ENCODE measurements at regions of chr6 and their contacts with region 1.

Region 1: GRCh38 chr6:43059168-43060033 is at the starts of genes KLC4 and MRPL2:
- DNase-seq: peak; percentile 99
- H3K4me3 Mint-ChIP-seq: peak within 1 kb of the TSS; percentile 94
- H3K27ac Mint-ChIP-seq: peak within 1 kb of the TSS; percentile 96
- H3K4me1 Mint-ChIP-seq: peaks cover 28% of the 10 kb centered on the region
- H3K27me3 Mint-ChIP-seq: no peaks in the 10 kb centered on the region
- CTCF ChIP-seq: no peak
- total RNA-seq, gene KLC4: 17.5 and 23.4 TPM in 2 replicates
- total RNA-seq, gene MRPL2: 155 and 174 TPM in 2 replicates

Region 2: DNA sequence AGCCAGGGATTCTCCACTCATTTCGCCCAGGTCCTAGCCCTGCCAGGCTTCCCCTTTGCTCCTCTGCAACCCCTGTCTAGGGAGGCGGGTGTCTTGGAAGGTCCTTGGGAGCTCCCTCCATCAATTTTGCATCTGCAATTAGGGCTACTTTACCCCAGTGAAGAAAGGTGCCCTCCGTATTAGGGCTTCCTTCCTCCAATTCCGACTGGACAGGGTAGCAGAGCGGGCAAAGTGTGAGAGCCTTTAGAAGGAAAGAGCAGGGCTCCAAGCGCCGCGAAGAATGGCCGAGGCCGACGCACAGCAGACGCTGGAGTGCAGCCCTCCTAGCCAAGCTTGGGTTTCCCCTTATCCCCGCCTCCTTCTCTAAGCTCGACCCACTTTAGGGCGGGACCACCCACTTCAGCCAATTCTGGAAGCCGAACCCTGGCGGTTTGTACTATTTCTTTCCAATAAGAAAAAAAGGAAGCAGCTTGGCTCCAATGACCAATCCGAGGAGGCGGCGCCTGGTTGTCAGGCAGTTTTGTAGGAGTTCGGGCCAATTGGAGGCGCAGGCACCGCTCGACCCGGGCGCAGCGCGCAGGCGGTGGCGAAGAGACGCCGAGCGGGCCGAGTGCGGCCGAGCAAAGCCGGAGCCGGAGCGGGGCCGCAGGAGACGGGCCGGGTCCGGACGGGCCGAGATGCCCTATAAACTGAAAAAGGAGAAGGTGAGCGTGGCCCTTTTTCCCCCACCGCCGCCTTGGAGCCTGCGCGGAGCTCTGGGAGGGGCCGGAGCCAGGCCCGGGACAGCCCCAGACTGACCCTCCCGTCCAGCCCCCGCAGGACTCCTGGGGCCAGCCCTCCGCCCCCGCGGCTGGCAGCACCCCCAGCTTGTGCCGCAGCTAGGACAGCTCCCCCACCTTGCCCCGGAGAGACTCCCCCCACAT is 75.1 kb before region 1 on chr6 and contains the start of gene PPP2R5D:
- CTCF ChIA-PET with region 1: interaction called, 3 read pairs
- POLR2A ChIA-PET with region 1: interaction called, 19 read pairs
- intact Hi-C with region 1: no loop called
- DNase-seq: peak; percentile 99
- H3K4me3 Mint-ChIP-seq: peak within 1 kb of the TSS; percentile 78
- H3K27ac Mint-ChIP-seq: peak within 1 kb of the TSS; percentile 90
- H3K4me1 Mint-ChIP-seq: peaks cover 39% of the 10 kb centered on the region
- H3K27me3 Mint-ChIP-seq: no peaks in the 10 kb centered on the region
- CTCF ChIP-seq: no peak
- total RNA-seq, gene PPP2R5D: 16.5 and 17.9 TPM in 2 replicates

Region 3: DNA sequence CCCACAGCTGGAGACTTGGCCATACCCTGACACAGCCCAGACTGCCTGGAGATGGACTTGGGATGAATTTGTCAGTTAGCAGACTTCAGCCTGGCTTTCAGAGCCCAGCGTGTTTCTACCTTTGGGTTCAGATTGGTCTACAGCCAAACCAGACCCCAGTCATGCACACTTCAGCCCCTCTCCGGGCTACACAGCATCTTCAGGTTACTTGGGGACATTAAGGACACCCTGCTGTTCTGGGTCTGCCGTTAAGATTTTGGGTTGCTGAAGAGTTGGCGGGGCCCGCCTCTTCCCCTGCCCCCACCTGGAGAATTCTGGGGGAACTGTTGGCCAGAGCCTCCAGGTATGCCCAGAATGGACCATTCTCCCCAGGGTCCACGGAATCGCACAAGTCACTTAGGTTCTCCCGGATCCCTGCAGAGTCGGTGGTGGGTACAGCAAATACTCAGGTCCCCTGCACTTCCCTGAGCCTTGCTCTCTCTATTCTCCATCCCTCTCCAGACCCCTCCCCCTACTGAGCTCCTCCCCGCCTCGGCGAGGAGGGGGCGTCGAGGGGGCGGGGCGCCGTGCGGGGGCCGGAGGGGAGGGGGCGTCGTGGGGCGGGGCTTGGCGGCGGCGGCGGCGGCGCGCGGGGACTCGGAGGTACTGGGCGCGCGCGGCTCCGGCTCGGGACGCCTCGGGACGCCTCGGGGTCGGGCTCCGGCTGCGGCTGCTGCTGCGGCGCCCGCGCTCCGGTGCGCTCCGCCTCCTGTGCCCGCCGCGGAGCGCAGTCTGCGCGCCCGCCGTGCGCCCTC is 16.5 kb after region 1 on chr6 and contains the start of gene PTK7:
- CTCF ChIA-PET with region 1: no interaction called
- POLR2A ChIA-PET with region 1: interaction called, 60 read pairs
- intact Hi-C with region 1: no loop called
- DNase-seq: peak; percentile 47
- H3K4me3 Mint-ChIP-seq: peak within 1 kb of the TSS; percentile 81
- H3K27ac Mint-ChIP-seq: peak within 1 kb of the TSS; percentile 61
- H3K4me1 Mint-ChIP-seq: peaks cover 14% of the 10 kb centered on the region
- H3K27me3 Mint-ChIP-seq: no peaks in the 10 kb centered on the region
- CTCF ChIP-seq: no peak
- total RNA-seq, gene PTK7: 42.6 and 48.4 TPM in 2 replicates

Region 4: DNA sequence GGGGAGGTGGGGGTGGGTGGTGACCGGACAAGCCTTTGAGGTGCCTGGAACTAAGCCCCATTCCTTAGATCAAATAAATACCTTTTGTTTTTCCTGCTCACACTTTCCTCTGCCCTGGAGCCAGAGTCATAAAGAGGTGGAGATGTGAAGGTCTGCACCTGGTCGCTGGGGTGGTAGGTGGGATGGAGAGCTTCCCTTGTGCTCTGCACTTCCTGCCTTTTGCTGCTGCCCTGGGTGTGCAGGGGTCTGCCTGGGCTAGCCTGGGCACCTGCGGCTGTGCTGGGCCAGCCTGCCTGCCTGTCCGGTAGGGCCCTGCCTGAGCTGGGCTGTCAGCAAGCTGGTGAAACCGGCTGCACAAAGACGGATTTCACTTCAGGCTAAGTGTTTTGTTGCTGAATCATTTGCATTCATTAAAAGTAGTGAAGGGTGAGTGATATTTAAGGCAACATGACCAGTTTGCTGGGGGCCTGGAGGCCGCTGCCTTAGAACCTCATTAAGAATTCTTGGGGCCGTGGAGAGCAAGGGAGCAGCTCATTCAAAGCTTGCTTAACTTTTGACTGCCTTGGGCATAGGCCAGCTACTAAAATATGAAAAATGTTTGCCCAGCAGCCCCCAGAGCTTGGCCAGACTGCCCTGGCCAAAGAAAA is 37.2 kb after region 1 on chr6:
- CTCF ChIA-PET with region 1: interaction called, 5 read pairs
- POLR2A ChIA-PET with region 1: interaction called, 26 read pairs
- intact Hi-C with region 1: no loop called
- DNase-seq: peak; percentile 83
- H3K4me3 Mint-ChIP-seq: peak overlapping the region; percentile 55
- H3K27ac Mint-ChIP-seq: peak overlapping the region; percentile 92
- H3K4me1 Mint-ChIP-seq: peaks cover 31% of the 10 kb centered on the region
- H3K27me3 Mint-ChIP-seq: no peaks in the 10 kb centered on the region
- CTCF ChIP-seq: no peak

Region 5: DNA sequence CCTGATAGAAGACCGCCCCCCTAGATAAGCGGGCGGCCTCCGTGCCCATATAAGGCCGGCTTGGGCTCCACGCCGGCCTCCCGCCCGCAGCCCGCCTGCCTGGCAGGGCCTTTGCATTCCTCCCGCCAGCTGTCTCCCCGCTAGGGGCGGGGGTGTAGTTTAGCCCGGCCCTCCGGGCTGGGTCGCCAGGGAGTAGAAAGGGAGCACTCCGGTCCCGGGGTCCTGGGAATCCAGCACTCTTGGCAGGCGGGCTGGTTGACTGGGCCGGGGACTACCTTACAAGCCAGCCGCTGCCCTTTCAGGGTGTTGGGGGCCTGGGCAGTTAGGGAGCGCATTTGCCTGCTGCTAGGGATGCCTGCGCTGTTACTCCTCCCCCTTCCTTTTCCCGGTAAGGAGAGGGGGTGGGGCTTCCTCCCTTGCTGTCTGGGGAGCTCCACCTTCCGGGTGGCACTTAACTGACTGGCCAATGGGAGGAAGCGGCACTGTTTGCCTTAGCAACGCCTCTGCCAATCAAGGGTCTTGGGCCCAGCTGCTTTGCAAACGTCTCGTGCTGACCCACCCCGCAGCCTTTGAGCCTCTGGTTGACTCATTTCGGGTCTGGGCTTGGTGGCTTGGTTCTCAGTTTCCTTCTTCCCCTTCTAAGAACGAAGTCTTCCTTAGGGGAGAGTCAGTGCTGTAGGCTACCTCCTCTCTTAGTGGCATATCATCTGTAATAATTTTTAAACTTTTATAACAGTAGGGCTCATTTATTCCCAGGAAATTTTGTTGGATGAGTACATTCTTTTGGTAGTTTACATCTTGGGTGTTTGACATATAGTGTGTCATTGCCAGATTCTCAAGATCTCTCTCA is 115.1 kb after region 1 on chr6:
- CTCF ChIA-PET with region 1: no interaction called
- POLR2A ChIA-PET with region 1: interaction called, 44 read pairs
- intact Hi-C with region 1: no loop called
- DNase-seq: peak; percentile 99
- H3K4me3 Mint-ChIP-seq: peak overlapping the region; percentile 87
- H3K27ac Mint-ChIP-seq: peak overlapping the region; percentile 83
- H3K4me1 Mint-ChIP-seq: peaks cover 30% of the 10 kb centered on the region
- H3K27me3 Mint-ChIP-seq: no peaks in the 10 kb centered on the region
- CTCF ChIP-seq: no peak

Region 6: DNA sequence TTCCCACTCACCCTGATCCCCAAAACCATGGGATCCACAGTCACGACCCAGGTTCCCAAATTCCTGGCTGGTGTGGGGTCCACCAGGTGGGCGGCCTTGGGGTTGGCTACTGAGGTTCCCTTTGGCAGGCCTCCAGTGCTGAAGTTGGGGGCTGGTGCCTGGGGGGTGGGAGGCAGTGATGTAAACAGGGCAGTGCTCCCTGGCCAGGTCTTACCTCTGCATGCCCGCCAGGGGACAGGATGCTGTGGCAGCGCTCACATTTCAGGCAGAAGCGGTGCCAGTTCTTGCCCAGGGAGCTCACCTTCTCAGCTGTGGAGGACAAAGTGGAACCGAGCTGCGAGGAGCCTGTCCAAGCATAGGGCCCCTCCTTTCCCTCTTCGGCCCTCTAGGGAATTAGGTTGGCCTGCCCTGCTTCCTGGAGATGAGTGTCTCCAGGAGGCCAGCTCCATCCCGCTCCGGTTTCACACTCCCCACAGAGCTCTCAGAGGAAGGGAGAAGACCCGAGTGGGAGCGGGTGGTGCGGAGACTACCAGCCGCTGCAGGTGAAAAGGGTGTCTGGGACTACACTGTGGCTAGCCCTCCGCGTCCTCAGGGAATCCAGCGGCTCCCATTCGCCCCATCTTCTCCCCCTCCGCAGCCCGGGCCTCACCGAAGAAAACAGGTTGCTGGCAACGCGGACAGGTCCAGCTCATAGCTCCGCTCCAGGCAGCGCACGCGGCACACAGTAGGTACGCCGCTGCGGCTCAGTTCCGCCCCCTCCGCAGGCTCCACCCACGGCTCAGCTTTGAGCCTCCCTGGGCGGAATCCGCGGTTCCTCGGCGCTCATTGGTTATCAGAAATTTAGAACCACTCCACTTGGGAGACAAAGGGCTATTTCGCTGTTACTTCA is 248.9 kb after region 1 on chr6 and contains the start of gene CRIP3:
- CTCF ChIA-PET with region 1: no interaction called
- POLR2A ChIA-PET with region 1: no interaction called
- intact Hi-C with region 1: no loop called
- DNase-seq: peak; percentile 56
- H3K4me3 Mint-ChIP-seq: peak within 1 kb of the TSS; percentile 61
- H3K27ac Mint-ChIP-seq: no peak within 1 kb of the TSS
- H3K4me1 Mint-ChIP-seq: no peaks in the 10 kb centered on the region
- H3K27me3 Mint-ChIP-seq: no peaks in the 10 kb centered on the region
- CTCF ChIP-seq: peak; percentile 34
- total RNA-seq, gene CRIP3: not detected in 2 replicates

Region 7: DNA sequence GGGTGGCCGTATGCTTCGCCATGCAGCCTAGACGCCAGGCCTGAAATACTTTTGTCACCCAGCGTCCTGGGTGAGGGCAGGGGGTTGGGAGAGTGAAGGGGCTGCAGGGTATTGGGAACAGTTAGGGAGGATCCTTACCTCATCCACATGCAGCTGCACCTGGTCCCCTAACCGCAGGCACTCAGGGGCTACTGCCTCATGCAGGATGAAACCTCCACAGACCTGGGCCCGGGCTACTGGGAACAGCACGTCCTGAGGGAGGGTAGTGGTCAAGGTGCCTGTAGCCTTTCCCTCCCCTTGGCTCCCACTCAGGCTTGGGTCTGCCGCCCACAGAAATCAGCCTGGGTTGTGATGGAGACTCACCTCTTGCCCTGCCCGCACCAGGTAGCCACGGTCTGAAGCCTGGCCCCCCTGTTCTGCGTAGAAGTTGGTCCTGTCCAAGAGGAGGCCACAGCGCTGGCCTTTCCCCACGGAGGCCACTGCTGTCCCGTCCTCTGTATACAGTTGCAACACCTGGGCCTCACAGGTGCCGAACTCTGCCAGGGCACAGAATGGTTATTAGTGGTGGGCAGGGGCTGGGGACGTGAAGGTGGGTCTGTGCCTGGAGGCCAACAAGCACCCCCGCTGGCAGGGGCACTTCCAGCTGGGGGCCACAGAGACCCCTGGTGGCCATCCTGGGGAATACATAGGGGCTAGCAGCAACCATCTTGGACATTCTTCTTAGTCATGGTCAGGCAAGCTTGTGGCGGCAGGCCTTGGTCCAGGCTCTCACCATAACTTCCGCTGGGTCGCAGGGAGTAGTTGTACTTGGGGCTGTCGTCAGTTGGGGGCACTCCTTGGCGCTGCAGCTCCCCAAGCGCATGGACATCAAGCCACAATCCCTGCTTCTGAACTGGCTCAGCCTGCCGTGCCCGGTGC is 1245.1 kb after region 1 on chr6:
- CTCF ChIA-PET with region 1: no interaction called
- POLR2A ChIA-PET with region 1: no interaction called
- intact Hi-C with region 1: no loop called
- DNase-seq: peak; percentile 26
- H3K4me3 Mint-ChIP-seq: no peak overlapping the region
- H3K27ac Mint-ChIP-seq: no peak overlapping the region
- H3K4me1 Mint-ChIP-seq: peaks cover 9% of the 10 kb centered on the region
- H3K27me3 Mint-ChIP-seq: no peaks in the 10 kb centered on the region
- CTCF ChIP-seq: peak; percentile 53